Endothelial cell of umbilical vein (primary cell): ENCODE measurements at regions of chr11 and their contacts with region 1.

Region 1: GRCh38 chr11:44416776-44417175 is 106.8 kb upstream of the ALX4 start:
- DNase-seq: no peak
- H3K4me3 ChIP-seq: no peak overlapping the region
- H3K27ac ChIP-seq: no peak overlapping the region
- H3K4me1 ChIP-seq: no peaks in the 10 kb centered on the region
- H3K27me3 ChIP-seq: peaks cover 3 to 6% of the 10 kb centered on the region in 2 experiments
- CTCF ChIP-seq: no peak
- POLR2A ChIP-seq: no peak

Region 2: GRCh38 chr11:44270403-44271106 is 146.2 kb before region 1 on chr11:
- CTCF ChIA-PET with region 1: no interaction called
- POLR2A ChIA-PET with region 1: no interaction called
- dilution Hi-C with region 1: no loop called
- intact Hi-C with region 1: no loop called
- DNase-seq: no peak
- H3K4me3 ChIP-seq: no peak overlapping the region
- H3K27ac ChIP-seq: peak overlapping the region; percentile 87
- H3K4me1 ChIP-seq: peaks cover 20% of the 10 kb centered on the region
- H3K27me3 ChIP-seq: no peaks in the 10 kb centered on the region
- CTCF ChIP-seq: no peak
- POLR2A ChIP-seq: no peak

Region 3: GRCh38 chr11:44398266-44399045 is 18.3 kb before region 1 on chr11:
- CTCF ChIA-PET with region 1: no interaction called
- POLR2A ChIA-PET with region 1: no interaction called
- dilution Hi-C with region 1: no loop called
- intact Hi-C with region 1: loop called (anchors 1 kb)
- DNase-seq: no peak
- H3K4me3 ChIP-seq: no peak overlapping the region
- H3K27ac ChIP-seq: no peak overlapping the region
- H3K4me1 ChIP-seq: no peaks in the 10 kb centered on the region
- H3K27me3 ChIP-seq: no peaks in the 10 kb centered on the region
- CTCF ChIP-seq: no peak
- POLR2A ChIP-seq: no peak